IMR-90 (cell line): ENCODE measurements at regions of chr9 and their contacts with region 1.

Region 1: GRCh38 chr9:69223605-69224004 is 49.5 kb downstream of the TJP2 start:
- DNase-seq: peak; percentile 70
- ATAC-seq: peak; percentile 99
- H3K4me3 ChIP-seq: no peak overlapping the region
- H3K27ac ChIP-seq: no peak overlapping the region
- H3K4me1 ChIP-seq: no peaks in the 10 kb centered on the region
- H3K27me3 ChIP-seq: no peaks in the 10 kb centered on the region
- CTCF ChIP-seq: peak; percentile 63
- POLR2A ChIP-seq: no peak
- RAD21 ChIP-seq: peak; percentile 44

Region 2: DNA sequence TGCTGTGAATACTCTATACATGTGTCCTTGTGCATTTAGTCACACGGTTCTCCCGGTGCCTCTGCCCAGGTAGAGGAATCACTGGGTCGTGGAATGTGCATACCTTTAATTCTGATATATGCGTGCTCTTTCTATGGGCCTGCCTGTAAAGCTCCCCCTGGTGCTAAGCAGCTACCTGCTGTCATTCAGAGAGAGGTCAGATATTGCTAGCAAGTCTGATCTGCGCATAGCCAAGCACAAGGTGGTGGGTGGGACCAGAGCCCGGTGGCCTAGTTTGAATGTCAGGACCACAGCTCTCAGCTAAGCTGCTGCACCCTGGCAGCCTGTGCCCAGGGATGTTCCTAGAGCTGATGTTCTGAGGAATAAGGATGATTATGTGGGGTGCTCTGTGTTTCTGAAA is 16.1 kb before region 1 on chr9:
- CTCF ChIA-PET with region 1: interaction called, 10 read pairs
- POLR2A ChIA-PET with region 1: no interaction called
- dilution Hi-C with region 1: no loop called
- in situ Hi-C with region 1: no loop called
- intact Hi-C with region 1: no loop called
- DNase-seq: no peak
- ATAC-seq: no peak
- H3K4me3 ChIP-seq: no peak overlapping the region
- H3K27ac ChIP-seq: no peak overlapping the region
- H3K4me1 ChIP-seq: peaks cover 9% of the 10 kb centered on the region
- H3K27me3 ChIP-seq: no peaks in the 10 kb centered on the region
- CTCF ChIP-seq: no peak
- POLR2A ChIP-seq: no peak
- RAD21 ChIP-seq: no peak

Region 3: DNA sequence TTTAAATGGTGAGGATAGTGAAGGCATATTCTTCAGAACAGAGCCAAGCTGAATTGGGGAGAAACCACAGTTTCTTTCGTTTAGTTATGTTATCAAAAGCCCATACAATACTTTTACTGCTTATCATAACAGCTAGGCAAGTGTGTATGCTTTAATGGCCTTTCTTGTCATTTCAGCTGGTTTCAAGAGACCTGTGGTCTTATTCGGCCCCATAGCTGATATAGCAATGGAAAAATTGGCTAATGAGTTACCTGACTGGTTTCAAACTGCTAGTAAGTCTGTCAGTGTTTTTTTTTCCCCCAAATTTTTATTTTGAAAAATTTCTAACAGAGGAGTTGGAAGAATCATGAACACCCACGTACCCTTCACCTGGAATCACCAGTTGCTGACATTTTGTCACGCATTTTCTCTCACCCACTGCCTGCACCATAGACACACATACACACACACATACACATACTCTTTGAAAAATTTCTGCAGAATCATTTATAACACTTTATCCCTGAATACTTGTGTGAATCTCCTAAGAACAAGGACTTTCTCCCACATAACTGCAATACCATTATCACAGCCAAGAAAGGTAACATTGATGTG is 14.2 kb after region 1 on chr9:
- CTCF ChIA-PET with region 1: interaction called, 19 read pairs
- POLR2A ChIA-PET with region 1: no interaction called
- dilution Hi-C with region 1: no loop called
- in situ Hi-C with region 1: no loop called
- intact Hi-C with region 1: no loop called
- DNase-seq: no peak
- ATAC-seq: no peak
- H3K4me3 ChIP-seq: no peak overlapping the region
- H3K27ac ChIP-seq: no peak overlapping the region
- H3K4me1 ChIP-seq: no peaks in the 10 kb centered on the region
- H3K27me3 ChIP-seq: no peaks in the 10 kb centered on the region
- CTCF ChIP-seq: no peak
- POLR2A ChIP-seq: no peak
- RAD21 ChIP-seq: no peak

Region 4: GRCh38 chr9:69243116-69243515 is 19.5 kb after region 1 on chr9:
- CTCF ChIA-PET with region 1: interaction called, 19 read pairs
- POLR2A ChIA-PET with region 1: no interaction called
- dilution Hi-C with region 1: no loop called
- in situ Hi-C with region 1: no loop called
- intact Hi-C with region 1: no loop called
- DNase-seq: no peak
- ATAC-seq: no peak
- H3K4me3 ChIP-seq: no peak overlapping the region
- H3K27ac ChIP-seq: no peak overlapping the region
- H3K4me1 ChIP-seq: no peaks in the 10 kb centered on the region
- H3K27me3 ChIP-seq: no peaks in the 10 kb centered on the region
- CTCF ChIP-seq: no peak
- POLR2A ChIP-seq: no peak
- RAD21 ChIP-seq: no peak

Region 5: DNA sequence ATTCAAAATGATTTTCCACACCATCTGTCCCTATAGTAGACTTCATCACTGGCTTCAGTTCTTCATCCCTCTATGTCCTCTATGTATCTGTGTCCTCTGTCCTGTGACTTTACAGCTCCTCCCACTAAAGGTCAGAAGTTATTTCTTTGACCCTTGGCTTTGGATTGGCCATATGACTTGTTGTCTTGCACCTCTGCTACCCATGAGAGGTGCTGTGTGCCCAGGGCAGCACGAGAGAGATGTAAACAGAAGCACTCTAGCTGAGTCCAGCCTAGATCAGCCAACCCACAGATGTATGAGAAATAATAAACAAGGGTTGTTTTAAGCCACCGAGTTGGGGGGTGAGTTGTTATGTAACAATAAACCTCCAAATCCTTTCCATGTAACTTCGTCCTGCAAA is 38.0 kb after region 1 on chr9:
- CTCF ChIA-PET with region 1: no interaction called
- POLR2A ChIA-PET with region 1: no interaction called
- dilution Hi-C with region 1: no loop called
- in situ Hi-C with region 1: no loop called
- intact Hi-C with region 1: no loop called
- DNase-seq: no peak
- ATAC-seq: no peak; the same call in 1 of the 2 replicates
- H3K4me3 ChIP-seq: no peak overlapping the region
- H3K27ac ChIP-seq: no peak overlapping the region
- H3K4me1 ChIP-seq: no peaks in the 10 kb centered on the region; the same call in 1 of the 2 replicates
- H3K27me3 ChIP-seq: no peaks in the 10 kb centered on the region
- CTCF ChIP-seq: no peak
- POLR2A ChIP-seq: no peak
- RAD21 ChIP-seq: no peak